RWPE1 (cell line): ENCODE measurements at regions of chr5 and their contacts with region 1.

Region 1: DNA sequence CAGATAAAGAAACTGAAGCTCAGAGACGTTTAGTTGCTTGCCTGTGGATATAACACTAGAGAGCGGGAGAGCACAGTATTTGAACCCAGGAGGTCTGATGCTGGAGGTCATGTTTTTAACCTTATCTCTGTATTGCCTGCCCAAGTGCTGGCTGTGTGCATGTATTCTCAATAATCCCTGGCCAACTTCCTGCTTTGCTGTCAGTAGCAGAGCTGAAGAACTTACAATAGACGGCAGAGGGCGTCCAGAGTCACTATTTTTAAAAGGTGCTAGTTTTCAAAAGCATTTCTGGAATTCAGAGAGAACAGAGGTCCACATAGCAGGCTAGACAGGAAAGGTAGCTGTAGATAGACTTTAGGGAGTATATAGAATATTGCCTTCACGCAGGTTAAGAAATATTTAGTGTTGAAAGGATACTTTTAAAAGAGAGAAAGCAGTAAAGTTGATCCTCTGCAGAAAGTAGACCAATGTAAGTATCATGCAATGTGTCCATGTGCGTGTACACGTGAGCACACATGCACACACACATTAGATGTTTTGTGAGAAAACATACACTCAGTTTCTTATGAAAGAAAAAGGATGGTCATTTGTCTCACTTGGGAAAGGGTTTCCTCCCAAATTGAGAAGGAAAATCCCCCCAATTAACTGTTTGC is 46.3 kb downstream of the PTCD2 start:
- DNase-seq: peak; percentile 66
- H3K27ac ChIP-seq: no peak overlapping the region
- CTCF ChIP-seq: peak; percentile 94

Region 2: DNA sequence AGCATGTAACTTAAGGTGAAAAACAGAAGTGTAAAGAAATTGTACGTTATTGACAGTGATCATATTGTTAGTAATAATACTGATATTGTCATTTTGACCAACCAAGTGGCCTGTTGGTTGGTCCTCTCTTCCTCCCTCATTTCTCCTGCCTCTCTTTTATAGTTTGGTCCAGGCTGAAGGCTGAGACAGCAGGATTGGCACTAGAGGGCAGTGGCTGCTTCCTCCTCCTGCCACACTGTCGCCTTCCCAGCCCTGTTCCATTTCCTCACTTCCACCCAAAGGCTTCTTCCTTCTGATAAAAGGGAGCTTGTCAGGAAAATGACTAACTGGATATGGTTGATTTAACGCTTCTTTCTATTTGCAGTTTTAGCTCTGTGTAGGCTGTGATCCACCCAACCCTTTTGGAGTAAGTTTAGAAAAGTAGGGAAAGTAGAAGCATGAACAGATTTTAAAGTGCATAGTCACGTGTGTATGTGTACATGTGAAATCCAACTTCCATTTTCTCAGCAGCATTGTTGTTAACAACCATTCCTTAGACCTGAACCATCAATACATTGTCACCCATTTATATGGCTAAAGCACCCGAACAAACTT is 10.6 kb before region 1 on chr5:
- CTCF ChIA-PET with region 1: interaction called, 16 read pairs
- POLR2A ChIA-PET with region 1: no interaction called
- DNase-seq: peak; percentile 45
- H3K27ac ChIP-seq: no peak overlapping the region
- CTCF ChIP-seq: peak; percentile 60

Region 3: GRCh38 chr5:72378636-72379290 is 12.3 kb after region 1 on chr5:
- CTCF ChIA-PET with region 1: interaction called, 11 read pairs
- POLR2A ChIA-PET with region 1: no interaction called
- DNase-seq: peak; percentile 97
- H3K27ac ChIP-seq: no peak overlapping the region
- CTCF ChIP-seq: no peak

Region 4: DNA sequence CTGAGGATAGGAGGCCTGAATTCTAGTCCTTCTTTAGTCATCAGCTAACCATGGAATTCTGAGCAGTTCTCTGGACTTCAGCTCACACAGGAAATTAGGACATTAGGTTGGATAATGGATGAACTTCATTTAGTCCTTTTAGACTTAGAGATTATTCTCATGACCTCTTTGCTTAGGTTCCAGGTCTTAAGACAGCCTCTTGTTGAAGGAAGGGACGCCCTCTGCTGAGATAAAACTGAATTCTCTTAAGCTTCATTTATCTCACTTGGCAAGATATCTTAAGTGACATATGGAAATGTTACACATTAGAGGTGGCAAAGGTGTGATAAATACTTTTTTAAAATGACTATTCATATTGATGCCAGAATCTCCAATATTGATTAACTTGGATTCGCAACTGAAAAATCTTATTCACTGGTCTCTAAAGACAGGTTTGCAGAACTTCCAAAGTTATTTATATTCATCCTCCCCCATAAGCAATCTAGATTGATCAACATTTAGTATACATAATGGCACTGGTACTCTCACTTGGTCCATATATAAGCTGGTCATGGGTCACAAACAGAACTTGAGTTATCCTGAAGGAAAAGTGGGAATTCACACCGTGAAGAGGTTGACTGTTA is 157.6 kb after region 1 on chr5:
- CTCF ChIA-PET with region 1: interaction called, 62 read pairs
- POLR2A ChIA-PET with region 1: no interaction called
- DNase-seq: peak; percentile 52
- H3K27ac ChIP-seq: no peak overlapping the region
- CTCF ChIP-seq: peak; percentile 74